Mammary epithelial cell (primary cell): ENCODE measurements at regions of chr7 and their contacts with region 1.

Region 1: GRCh38 chr7:48424731-48425130 is 253.5 kb downstream of the ABCA13 start:
- DNase-seq: peak; percentile 48
- H3K4me3 ChIP-seq: no peak overlapping the region
- H3K27ac ChIP-seq: no peak overlapping the region
- H3K4me1 ChIP-seq: peaks cover 56% of the 10 kb centered on the region
- H3K27me3 ChIP-seq: no peaks in the 10 kb centered on the region
- CTCF ChIP-seq: peak; percentile 89 to 94

Region 2: GRCh38 chr7:48168159-48168558 is 256.6 kb before region 1 on chr7:
- CTCF ChIA-PET with region 1: no interaction called
- dilution Hi-C with region 1: no loop called
- in situ Hi-C with region 1: no loop called
- intact Hi-C with region 1: loop called (anchors 10 kb)
- DNase-seq: peak; percentile 84
- H3K4me3 ChIP-seq: no peak overlapping the region
- H3K27ac ChIP-seq: no peak overlapping the region
- H3K4me1 ChIP-seq: peaks cover 10% of the 10 kb centered on the region
- H3K27me3 ChIP-seq: no peaks in the 10 kb centered on the region
- CTCF ChIP-seq: peak in 1 of 2 donors; percentile 42

Region 3: DNA sequence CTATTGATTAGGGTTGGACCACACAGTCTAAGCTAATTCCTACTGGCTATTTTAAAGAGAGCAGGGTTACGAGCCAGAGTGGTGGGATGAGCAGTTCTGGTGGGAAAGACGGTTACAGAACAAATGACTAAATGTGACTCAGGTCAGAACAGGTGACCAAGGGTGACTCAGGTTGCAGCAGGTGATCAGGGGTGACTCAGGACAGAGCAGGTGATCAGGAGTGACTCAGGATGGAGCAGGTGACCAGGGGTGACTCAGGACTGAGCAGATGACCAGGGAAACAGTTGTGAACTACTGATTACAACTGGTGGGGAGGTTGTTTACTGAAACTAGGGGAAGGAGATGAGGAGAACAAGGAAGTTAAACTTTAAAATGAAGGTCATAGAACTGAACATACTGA is 112.8 kb after region 1 on chr7:
- CTCF ChIA-PET with region 1: no interaction called
- dilution Hi-C with region 1: no loop called
- in situ Hi-C with region 1: no loop called
- intact Hi-C with region 1: loop called (anchors 2 kb)
- DNase-seq: peak; percentile 93
- H3K4me3 ChIP-seq: no peak overlapping the region
- H3K27ac ChIP-seq: peak overlapping the region; percentile 58
- H3K4me1 ChIP-seq: no peaks in the 10 kb centered on the region
- H3K27me3 ChIP-seq: no peaks in the 10 kb centered on the region
- CTCF ChIP-seq: no peak

Region 4: GRCh38 chr7:48708635-48709034 is 283.9 kb after region 1 on chr7:
- CTCF ChIA-PET with region 1: no interaction called
- dilution Hi-C with region 1: no loop called
- in situ Hi-C with region 1: no loop called
- intact Hi-C with region 1: loop called (anchors 1 kb)
- DNase-seq: peak; percentile 44
- H3K4me3 ChIP-seq: no peak overlapping the region
- H3K27ac ChIP-seq: no peak overlapping the region
- H3K4me1 ChIP-seq: peaks cover 9% of the 10 kb centered on the region
- H3K27me3 ChIP-seq: no peaks in the 10 kb centered on the region
- CTCF ChIP-seq: peak; percentile 44 to 59

Region 5: GRCh38 chr7:48875045-48875916 is 450.6 kb after region 1 on chr7:
- CTCF ChIA-PET with region 1: interaction called, 3 read pairs
- dilution Hi-C with region 1: no loop called
- in situ Hi-C with region 1: loop called (anchors 10 to 25 kb)
- intact Hi-C with region 1: loop called (anchors 1 kb)
- DNase-seq: peak; percentile 41
- H3K4me3 ChIP-seq: no peak overlapping the region
- H3K27ac ChIP-seq: no peak overlapping the region
- H3K4me1 ChIP-seq: no peaks in the 10 kb centered on the region
- H3K27me3 ChIP-seq: no peaks in the 10 kb centered on the region
- CTCF ChIP-seq: peak; percentile 68 to 88

Region 6: GRCh38 chr7:49852619-49853462 is 1428.1 kb after region 1 on chr7:
- CTCF ChIA-PET with region 1: no interaction called
- dilution Hi-C with region 1: no loop called
- in situ Hi-C with region 1: no loop called
- intact Hi-C with region 1: loop called (anchors 1 kb)
- DNase-seq: peak; percentile 61
- H3K4me3 ChIP-seq: no peak overlapping the region
- H3K27ac ChIP-seq: no peak overlapping the region
- H3K4me1 ChIP-seq: no peaks in the 10 kb centered on the region
- H3K27me3 ChIP-seq: no peaks in the 10 kb centered on the region
- CTCF ChIP-seq: peak; percentile 94 to 96